CD4-positive, alpha-beta T cell (primary cell): ENCODE measurements at regions of chr16 and their contacts with region 1.

Region 1: GRCh38 chr16:48244080-48244862 is at the start of gene LONP2:
- DNase-seq: peak; percentile 81 to 94 (median 87)
- ATAC-seq: peak; percentile 95
- H3K4me3 ChIP-seq: peak within 1 kb of the TSS; percentile 86
- H3K4me3 Mint-ChIP-seq: peak within 1 kb of the TSS; percentile 90
- H3K27ac ChIP-seq: peak within 1 kb of the TSS; percentile 78
- H3K27ac Mint-ChIP-seq: peak within 1 kb of the TSS; percentile 89
- H3K4me1 ChIP-seq: peaks cover 43% of the 10 kb centered on the region
- H3K4me1 Mint-ChIP-seq: peaks cover 49% of the 10 kb centered on the region
- H3K27me3 ChIP-seq: no peaks in the 10 kb centered on the region
- H3K27me3 Mint-ChIP-seq: no peaks in the 10 kb centered on the region
- CTCF ChIP-seq: no peak
- total RNA-seq, gene LONP2: 77.2 to 81.0 TPM

Region 2: GRCh38 chr16:46689365-46690280 is 1554.6 kb before region 1 on chr16 and contains the start of gene ORC6:
- CTCF ChIA-PET with region 1: no interaction called
- POLR2A ChIA-PET with region 1: no interaction called
- intact Hi-C with region 1: loop called in 1 of 2 experiments (anchors 2 kb)
- DNase-seq: peak; percentile 92 to 97 (median 96)
- ATAC-seq: peak; percentile 72
- H3K4me3 ChIP-seq: peak within 1 kb of the TSS; percentile 94
- H3K4me3 Mint-ChIP-seq: no peak within 1 kb of the TSS
- H3K27ac ChIP-seq: peak within 1 kb of the TSS; percentile 91 to 98
- H3K27ac Mint-ChIP-seq: no peak within 1 kb of the TSS
- H3K4me1 ChIP-seq: peaks cover 23% of the 10 kb centered on the region
- H3K4me1 Mint-ChIP-seq: peaks cover 33% of the 10 kb centered on the region
- H3K27me3 ChIP-seq: no peaks in the 10 kb centered on the region
- H3K27me3 Mint-ChIP-seq: no peaks in the 10 kb centered on the region
- CTCF ChIP-seq: no peak
- total RNA-seq, gene ORC6: 3.7 to 3.8 TPM

Region 3: DNA sequence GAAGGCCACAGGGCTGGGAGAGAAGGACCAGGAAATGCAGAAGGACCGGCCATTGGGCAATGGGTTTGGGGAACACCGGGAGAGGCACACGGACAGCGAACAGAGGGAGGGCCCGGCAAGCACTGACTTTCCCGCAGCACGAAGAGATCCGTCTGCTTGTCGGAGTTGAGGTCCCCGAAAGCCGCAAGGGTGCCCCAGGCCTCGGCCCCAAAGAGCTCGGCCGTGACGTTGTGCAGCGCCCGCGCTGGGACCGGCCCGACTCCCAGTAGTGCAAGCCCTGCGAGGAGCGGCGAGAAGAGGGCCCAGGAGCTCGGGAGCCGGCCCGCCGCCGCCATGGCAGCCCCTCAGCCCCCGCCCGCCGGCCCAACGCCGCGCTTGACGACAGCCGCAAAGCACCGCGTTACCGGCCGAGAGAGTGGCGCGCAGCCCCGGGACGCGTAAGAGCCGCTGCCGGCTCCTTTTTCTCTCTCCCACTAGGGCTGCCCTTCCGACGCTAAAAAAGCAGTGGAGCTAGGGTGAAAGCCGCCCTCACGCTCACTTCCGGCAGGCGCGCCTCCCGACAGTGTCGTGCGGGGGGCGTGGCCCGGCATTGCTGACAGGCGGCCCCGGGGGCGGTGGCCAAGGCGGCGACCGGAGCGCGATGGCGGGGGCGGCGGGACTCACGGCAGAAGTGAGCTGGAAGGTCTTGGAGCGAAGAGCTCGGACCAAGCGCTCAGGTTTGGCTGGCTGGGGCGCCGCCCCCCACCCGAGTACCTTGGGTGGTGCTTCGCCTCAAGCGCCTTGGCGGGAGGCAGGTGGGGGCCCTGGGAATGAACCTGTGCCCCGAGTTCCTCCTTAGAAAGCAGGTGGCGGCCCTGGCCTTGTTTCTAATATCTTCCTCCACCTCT is 783.3 kb before region 1 on chr16 and contains the starts of genes ITFG1 and PHKB:
- CTCF ChIA-PET with region 1: no interaction called
- POLR2A ChIA-PET with region 1: no interaction called
- intact Hi-C with region 1: loop called in 1 of 2 experiments (anchors 10 kb)
- DNase-seq: peak; percentile 89 to 98 (median 94)
- ATAC-seq: peak; percentile 96
- H3K4me3 ChIP-seq: peak within 1 kb of the TSS; percentile 79
- H3K4me3 Mint-ChIP-seq: peak within 1 kb of the TSS; percentile 89
- H3K27ac ChIP-seq: peak within 1 kb of the TSS; percentile 87 to 93
- H3K27ac Mint-ChIP-seq: peak within 1 kb of the TSS; percentile 87
- H3K4me1 ChIP-seq: peaks cover 26% of the 10 kb centered on the region
- H3K4me1 Mint-ChIP-seq: peaks cover 70% of the 10 kb centered on the region
- H3K27me3 ChIP-seq: no peaks in the 10 kb centered on the region
- H3K27me3 Mint-ChIP-seq: no peaks in the 10 kb centered on the region
- CTCF ChIP-seq: no peak
- total RNA-seq, gene ITFG1: 18.0 to 18.5 TPM
- total RNA-seq, gene PHKB: 28.8 to 31.3 TPM

Region 4: GRCh38 chr16:48231727-48232492 is 12.4 kb before region 1 on chr16:
- CTCF ChIA-PET with region 1: no interaction called
- POLR2A ChIA-PET with region 1: no interaction called
- intact Hi-C with region 1: no loop called
- DNase-seq: peak in 7 of 14 experiments; percentile 2 to 50 (median 16)
- ATAC-seq: peak; percentile 52
- H3K4me3 ChIP-seq: no peak overlapping the region
- H3K4me3 Mint-ChIP-seq: no peak overlapping the region
- H3K27ac ChIP-seq: no peak overlapping the region
- H3K27ac Mint-ChIP-seq: no peak overlapping the region
- H3K4me1 ChIP-seq: no peaks in the 10 kb centered on the region
- H3K4me1 Mint-ChIP-seq: no peaks in the 10 kb centered on the region
- H3K27me3 ChIP-seq: no peaks in the 10 kb centered on the region
- H3K27me3 Mint-ChIP-seq: peaks cover 17% of the 10 kb centered on the region
- CTCF ChIP-seq: no peak

Region 5: DNA sequence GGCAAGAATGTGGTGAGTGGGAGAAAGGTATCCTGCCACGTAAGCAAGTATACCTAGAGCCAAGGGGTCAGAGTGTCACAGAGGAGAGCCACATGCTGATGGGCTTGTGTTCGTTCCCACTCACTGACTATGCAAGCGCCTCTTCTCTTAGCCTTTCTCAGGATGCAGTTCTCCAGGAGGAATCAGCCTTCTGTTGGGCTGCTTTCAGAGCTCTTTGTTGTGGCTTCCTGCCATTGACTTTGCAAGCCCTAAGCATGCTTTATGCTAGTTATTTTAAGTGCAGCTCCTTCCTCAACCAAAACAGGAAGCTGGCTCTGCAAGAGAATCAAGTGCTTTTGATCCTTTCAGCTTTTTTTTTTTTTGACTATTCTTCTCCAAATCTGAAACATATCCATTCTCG is 74.4 kb after region 1 on chr16:
- CTCF ChIA-PET with region 1: no interaction called
- POLR2A ChIA-PET with region 1: interaction called, 3 read pairs
- intact Hi-C with region 1: loop called in 1 of 2 experiments (anchors 5 kb)
- DNase-seq: peak in 12 of 14 experiments; percentile 4 to 82 (median 28)
- ATAC-seq: peak; percentile 96
- H3K4me3 ChIP-seq: peak overlapping the region; percentile 28
- H3K4me3 Mint-ChIP-seq: peak overlapping the region; percentile 77
- H3K27ac ChIP-seq: peak overlapping the region in 1 of 2 donors; percentile 41
- H3K27ac Mint-ChIP-seq: peak overlapping the region; percentile 89
- H3K4me1 ChIP-seq: peaks cover 24% of the 10 kb centered on the region
- H3K4me1 Mint-ChIP-seq: peaks cover 70% of the 10 kb centered on the region
- H3K27me3 ChIP-seq: no peaks in the 10 kb centered on the region
- H3K27me3 Mint-ChIP-seq: no peaks in the 10 kb centered on the region
- CTCF ChIP-seq: no peak

Region 6: GRCh38 chr16:48359983-48360382 is 115.7 kb after region 1 on chr16:
- CTCF ChIA-PET with region 1: no interaction called
- POLR2A ChIA-PET with region 1: no interaction called
- intact Hi-C with region 1: no loop called
- DNase-seq: no peak
- ATAC-seq: no peak
- H3K4me3 ChIP-seq: no peak overlapping the region
- H3K4me3 Mint-ChIP-seq: no peak overlapping the region
- H3K27ac ChIP-seq: no peak overlapping the region
- H3K27ac Mint-ChIP-seq: no peak overlapping the region
- H3K4me1 ChIP-seq: peaks cover under 1% of the 10 kb centered on the region
- H3K4me1 Mint-ChIP-seq: peaks cover 17% of the 10 kb centered on the region
- H3K27me3 ChIP-seq: no peaks in the 10 kb centered on the region
- H3K27me3 Mint-ChIP-seq: no peaks in the 10 kb centered on the region
- CTCF ChIP-seq: no peak

Region 7: GRCh38 chr16:48632137-48632774 is 388.0 kb after region 1 on chr16:
- CTCF ChIA-PET with region 1: no interaction called
- POLR2A ChIA-PET with region 1: no interaction called
- intact Hi-C with region 1: loop called in 1 of 2 experiments (anchors 5 kb)
- DNase-seq: no peak
- ATAC-seq: no peak
- H3K4me3 ChIP-seq: no peak overlapping the region
- H3K4me3 Mint-ChIP-seq: no peak overlapping the region
- H3K27ac ChIP-seq: no peak overlapping the region
- H3K27ac Mint-ChIP-seq: no peak overlapping the region
- H3K4me1 ChIP-seq: peaks cover 9% of the 10 kb centered on the region
- H3K4me1 Mint-ChIP-seq: peaks cover 8% of the 10 kb centered on the region
- H3K27me3 ChIP-seq: no peaks in the 10 kb centered on the region
- H3K27me3 Mint-ChIP-seq: peaks cover 3% of the 10 kb centered on the region
- CTCF ChIP-seq: no peak